ENCODE measurements at regions of chr11 and their contacts with region 1.

Region 1: GRCh38 chr11:65418711-65419459 is 3.7 kb upstream of the NEAT1 start:
- DNase-seq: peak; percentile 91
- ATAC-seq: peak; percentile 57
- H3K4me3 ChIP-seq: peak overlapping the region; percentile 79
- H3K27ac ChIP-seq: peak overlapping the region; percentile 100
- H3K4me1 ChIP-seq: peaks cover 51% of the 10 kb centered on the region
- H3K27me3 ChIP-seq: no peaks in the 10 kb centered on the region
- CTCF ChIP-seq: no peak
- EP300 ChIP-seq: peak; percentile 39 to 52; a peak in 3 of 4 replicates
- POLR2A ChIP-seq: peak; percentile 80
- RAD21 ChIP-seq: no peak

Region 2: DNA sequence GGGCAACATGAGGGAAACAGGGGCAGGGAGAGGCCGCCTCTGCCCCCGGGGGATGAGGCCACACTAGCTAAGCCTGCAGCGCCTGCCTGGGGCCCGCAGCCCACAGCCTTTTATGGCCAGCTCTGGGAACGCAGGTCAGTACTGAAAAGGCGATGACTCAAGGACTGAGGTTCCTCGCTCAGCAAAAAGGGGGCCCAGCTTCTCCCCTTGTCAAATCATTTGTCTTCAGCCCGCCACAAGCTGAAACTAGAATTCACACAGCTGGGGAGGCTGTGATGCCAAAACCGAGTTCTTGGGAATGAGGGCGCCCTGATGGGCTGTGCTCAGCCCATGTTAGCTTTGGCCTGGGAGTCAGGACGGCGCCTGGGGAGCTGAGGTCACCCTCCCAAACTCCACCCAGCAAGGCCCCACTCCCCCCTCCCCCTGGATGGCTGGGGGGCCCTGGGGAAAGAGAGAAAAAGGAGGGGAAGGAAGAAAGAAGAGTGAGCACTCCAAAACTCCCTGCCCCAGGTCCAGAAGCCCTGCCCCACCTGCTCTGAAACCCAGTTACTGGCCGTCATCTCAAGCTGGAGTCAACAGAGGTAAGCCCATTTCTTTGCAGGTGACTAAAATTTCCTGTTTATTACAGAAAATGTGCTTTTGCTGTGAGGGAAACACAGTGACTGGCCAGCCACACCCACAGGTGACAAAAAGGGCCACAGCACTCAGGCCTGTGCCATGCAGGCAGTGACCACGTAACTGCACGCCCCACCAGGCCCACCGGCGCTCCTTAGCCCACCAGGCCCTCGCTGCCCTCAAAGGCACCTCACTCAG is 554.2 kb before region 1 on chr11:
- CTCF ChIA-PET with region 1: no interaction called
- POLR2A ChIA-PET with region 1: no interaction called
- RAD21 ChIA-PET with region 1: no interaction called
- SMC1A ChIA-PET with region 1: no interaction called
- in situ Hi-C with region 1: loop called (anchors 10 kb)
- intact Hi-C with region 1: no loop called
- DNase-seq: no peak
- ATAC-seq: peak; percentile 59
- H3K4me3 ChIP-seq: peak overlapping the region; percentile 44
- H3K27ac ChIP-seq: peak overlapping the region; percentile 99
- H3K4me1 ChIP-seq: peaks cover 91% of the 10 kb centered on the region
- H3K27me3 ChIP-seq: no peaks in the 10 kb centered on the region
- CTCF ChIP-seq: no peak
- EP300 ChIP-seq: peak in 1 of 2 experiments; percentile 26; a peak in 2 of 4 replicates
- POLR2A ChIP-seq: peak; percentile 78
- RAD21 ChIP-seq: no peak

Region 3: GRCh38 chr11:64960719-64961118 is 458.2 kb before region 1 on chr11:
- CTCF ChIA-PET with region 1: no interaction called
- POLR2A ChIA-PET with region 1: no interaction called
- RAD21 ChIA-PET with region 1: no interaction called
- SMC1A ChIA-PET with region 1: no interaction called
- in situ Hi-C with region 1: no loop called
- intact Hi-C with region 1: no loop called
- DNase-seq: no peak
- ATAC-seq: no peak
- H3K4me3 ChIP-seq: no peak overlapping the region
- H3K27ac ChIP-seq: no peak overlapping the region
- H3K4me1 ChIP-seq: no peaks in the 10 kb centered on the region
- H3K27me3 ChIP-seq: no peaks in the 10 kb centered on the region
- CTCF ChIP-seq: no peak
- EP300 ChIP-seq: no peak
- POLR2A ChIP-seq: no peak
- RAD21 ChIP-seq: no peak

Region 4: DNA sequence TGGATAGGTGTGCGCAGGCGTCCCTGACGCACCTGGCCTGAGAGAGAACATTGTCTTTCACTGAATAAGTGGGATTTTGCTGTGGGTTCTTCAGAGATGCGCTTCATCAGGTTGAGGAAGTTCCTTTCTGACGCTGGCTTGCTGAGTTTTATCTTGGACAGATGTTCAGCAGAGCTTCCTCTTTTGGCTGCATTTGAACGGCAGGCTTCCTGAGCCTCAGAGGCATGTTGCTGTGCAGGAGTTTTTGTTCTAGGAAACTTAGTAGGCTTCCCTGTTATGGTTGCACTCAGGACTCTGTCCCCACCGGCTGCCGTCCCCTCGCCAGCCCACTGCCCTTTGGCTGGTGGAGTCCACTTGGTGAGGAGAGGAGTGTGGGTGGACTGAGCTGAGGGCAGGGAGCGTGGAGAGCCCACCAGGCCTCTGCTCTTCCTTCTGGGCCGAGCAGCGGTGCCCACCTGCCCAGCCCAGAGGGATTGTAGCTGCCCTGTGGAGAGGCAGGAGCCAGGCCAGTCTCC is 15.2 kb before region 1 on chr11:
- CTCF ChIA-PET with region 1: interaction called, 13 read pairs
- POLR2A ChIA-PET with region 1: interaction called, 10 read pairs
- RAD21 ChIA-PET with region 1: interaction called, 10 read pairs
- SMC1A ChIA-PET with region 1: interaction called, 12 read pairs
- in situ Hi-C with region 1: no loop called
- intact Hi-C with region 1: no loop called
- DNase-seq: no peak
- ATAC-seq: peak; percentile 72
- H3K4me3 ChIP-seq: no peak overlapping the region
- H3K27ac ChIP-seq: peak overlapping the region; percentile 91
- H3K4me1 ChIP-seq: peaks cover 20% of the 10 kb centered on the region
- H3K27me3 ChIP-seq: no peaks in the 10 kb centered on the region
- CTCF ChIP-seq: no peak
- EP300 ChIP-seq: no peak
- POLR2A ChIP-seq: no peak
- RAD21 ChIP-seq: no peak

Region 5: DNA sequence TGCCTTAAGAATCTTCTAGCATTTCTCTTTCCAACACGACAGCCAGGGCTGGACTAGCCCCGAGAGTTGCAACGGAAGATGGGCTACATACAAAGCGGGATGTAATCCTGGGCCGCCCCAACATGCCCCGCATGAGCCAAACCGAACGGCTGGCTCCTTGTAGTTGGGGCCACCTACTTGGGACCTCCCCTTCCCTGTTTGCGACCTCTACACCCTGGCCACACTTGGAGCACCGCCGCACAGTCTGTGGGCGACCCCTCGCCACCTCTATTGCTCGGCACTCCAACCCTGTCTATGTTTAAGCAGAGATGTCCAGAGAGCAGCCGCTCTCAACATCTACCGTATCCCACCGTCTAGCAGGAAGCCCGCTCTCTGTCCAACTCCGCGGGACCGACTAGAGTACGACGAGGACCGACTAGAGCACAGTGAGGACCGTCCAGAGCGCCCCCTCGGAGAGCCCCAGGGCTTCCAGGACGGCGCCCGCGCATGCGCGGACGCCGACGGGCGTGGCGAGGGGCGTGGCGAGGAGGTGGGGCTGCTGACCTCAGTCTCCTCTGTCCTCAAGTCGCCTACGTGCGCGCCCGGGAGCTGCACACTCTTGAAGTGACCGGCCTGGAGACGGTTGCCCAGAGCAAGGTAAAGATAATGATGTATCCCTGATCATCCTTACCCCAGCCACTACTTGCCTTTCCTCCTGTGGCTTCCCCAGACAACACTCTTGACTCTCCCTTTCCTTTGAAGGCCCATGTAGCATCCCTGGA is 36.0 kb after region 1 on chr11:
- CTCF ChIA-PET with region 1: interaction called, 362 read pairs
- POLR2A ChIA-PET with region 1: interaction called, 17 read pairs
- RAD21 ChIA-PET with region 1: interaction called, 13 read pairs
- SMC1A ChIA-PET with region 1: interaction called, 17 read pairs
- in situ Hi-C with region 1: no loop called
- intact Hi-C with region 1: loop called (anchors 5 kb)
- DNase-seq: peak; percentile 77
- ATAC-seq: peak; percentile 82
- H3K4me3 ChIP-seq: peak overlapping the region; percentile 80
- H3K27ac ChIP-seq: peak overlapping the region; percentile 93
- H3K4me1 ChIP-seq: peaks cover 25% of the 10 kb centered on the region
- H3K27me3 ChIP-seq: no peaks in the 10 kb centered on the region
- CTCF ChIP-seq: peak; percentile 12 to 40 (median 17); a peak in 4 of 6 replicates
- EP300 ChIP-seq: 0 out of 4 replicates have a peak, but pooled peaks of 1 of the 2 experiments have one; percentile 23
- POLR2A ChIP-seq: peak; percentile 99
- RAD21 ChIP-seq: 0 out of 2 replicates have a peak, but pooled peaks have one; percentile 5

Region 6: DNA sequence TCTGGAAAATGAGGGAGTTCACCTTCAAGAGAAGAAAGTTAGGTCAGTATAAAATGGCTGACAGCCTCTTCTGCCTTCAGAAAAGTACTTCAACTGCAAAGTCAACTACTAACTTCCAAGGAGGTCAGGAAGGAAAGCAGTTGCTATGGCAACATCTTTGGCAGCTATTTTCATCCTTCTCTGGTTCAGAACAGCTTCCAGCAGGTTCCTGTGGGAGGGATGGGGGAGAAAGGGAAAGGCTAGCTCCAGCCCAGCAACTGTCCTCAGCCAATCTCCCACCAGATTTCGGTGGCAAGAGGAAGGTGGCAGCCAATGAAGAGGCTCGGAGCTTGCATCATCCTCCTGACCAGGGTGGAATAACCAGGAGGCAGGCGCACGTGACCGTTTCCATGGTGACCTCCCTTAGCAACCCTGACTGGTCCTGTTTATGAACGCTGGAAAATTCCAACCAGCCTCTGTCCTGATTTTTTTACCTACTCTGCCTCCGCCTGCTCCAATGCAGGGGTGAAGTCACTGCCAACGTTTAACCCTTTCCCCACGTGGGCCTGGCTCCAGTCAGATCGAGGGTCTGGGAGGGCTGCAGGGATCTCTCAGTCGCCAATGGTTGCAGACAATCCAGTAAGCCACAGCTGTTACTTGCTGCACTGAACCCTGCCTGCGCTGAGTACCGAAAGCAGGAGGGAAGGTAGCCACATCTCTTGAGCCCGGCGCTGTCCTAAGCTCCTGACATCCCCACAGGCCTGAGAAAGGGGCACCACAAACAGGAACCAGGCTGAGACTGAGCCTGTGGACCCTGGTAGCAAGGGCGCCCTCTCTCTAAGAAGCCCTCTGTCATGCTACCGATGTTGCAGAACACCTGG is 68.8 kb after region 1 on chr11:
- CTCF ChIA-PET with region 1: interaction called, 10 read pairs
- POLR2A ChIA-PET with region 1: interaction called, 44 read pairs
- RAD21 ChIA-PET with region 1: interaction called, 282 read pairs
- SMC1A ChIA-PET with region 1: interaction called, 115 read pairs
- in situ Hi-C with region 1: no loop called
- intact Hi-C with region 1: no loop called
- DNase-seq: no peak
- ATAC-seq: peak; percentile 79
- H3K4me3 ChIP-seq: peak overlapping the region; percentile 15; the same call in 1 of the 2 replicates
- H3K27ac ChIP-seq: peak overlapping the region; percentile 62
- H3K4me1 ChIP-seq: peaks cover 61% of the 10 kb centered on the region
- H3K27me3 ChIP-seq: no peaks in the 10 kb centered on the region
- CTCF ChIP-seq: peak in 1 of 3 experiments; percentile 12; a peak in 2 of 6 replicates
- EP300 ChIP-seq: peak in 1 of 2 experiments; percentile 61; a peak in 1 of 4 replicates
- POLR2A ChIP-seq: peak; percentile 48; the same call in 1 of the 2 replicates
- RAD21 ChIP-seq: no peak

Region 7: DNA sequence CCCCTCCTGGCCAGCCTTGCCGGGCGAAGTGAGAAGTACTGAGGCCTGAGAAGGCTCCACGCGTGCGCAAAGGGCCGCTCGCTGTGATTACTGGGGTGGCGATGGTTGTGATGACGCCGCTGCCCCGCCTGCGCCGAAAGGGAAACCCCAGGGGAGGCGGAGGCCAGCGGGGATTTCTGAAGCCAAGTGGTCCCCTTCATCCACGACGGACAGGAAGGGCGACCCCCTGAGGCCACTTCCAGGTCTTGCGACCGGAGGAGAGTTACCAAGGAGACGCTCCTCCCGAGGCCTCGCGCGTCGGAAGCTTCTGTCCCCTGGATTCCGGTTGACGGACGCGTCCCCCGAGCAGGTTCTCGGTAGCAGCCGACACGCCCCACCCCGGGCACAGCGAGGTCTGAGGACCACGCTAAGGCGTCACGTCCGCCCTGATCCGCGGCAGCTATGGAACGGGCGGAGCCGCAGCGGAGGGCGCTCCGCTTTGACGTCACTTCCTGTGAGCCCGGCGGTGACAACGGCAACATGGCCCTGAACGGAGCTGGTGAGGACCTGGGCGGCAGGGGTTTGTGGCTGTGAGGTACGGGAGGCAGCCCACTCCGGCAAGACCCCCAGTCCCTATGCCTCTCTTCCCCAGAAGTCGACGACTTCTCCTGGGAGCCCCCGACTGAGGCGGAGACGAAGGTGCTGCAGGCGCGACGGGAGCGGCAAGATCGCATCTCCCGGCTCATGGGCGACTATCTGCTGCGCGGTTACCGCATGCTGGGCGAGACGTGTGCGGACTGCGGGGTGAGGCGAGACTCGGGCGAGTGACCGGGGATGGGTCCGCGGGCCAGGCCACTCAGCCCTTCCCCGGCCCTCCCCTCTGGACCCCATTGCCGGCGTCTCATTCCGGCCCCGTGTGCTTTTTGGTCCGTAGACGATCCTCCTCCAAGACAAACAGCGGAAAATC is 151.4 kb after region 1 on chr11 and contains the start of gene ZNRD2:
- CTCF ChIA-PET with region 1: interaction called, 3 read pairs
- POLR2A ChIA-PET with region 1: interaction called, 4 read pairs
- RAD21 ChIA-PET with region 1: interaction called, 6 read pairs
- SMC1A ChIA-PET with region 1: interaction called, 4 read pairs
- in situ Hi-C with region 1: no loop called
- intact Hi-C with region 1: loop called (anchors 5 kb)
- DNase-seq: peak; percentile 97
- ATAC-seq: peak; percentile 77
- H3K4me3 ChIP-seq: peak within 1 kb of the TSS; percentile 84
- H3K27ac ChIP-seq: peak within 1 kb of the TSS; percentile 76
- H3K4me1 ChIP-seq: peaks cover 33% of the 10 kb centered on the region
- H3K27me3 ChIP-seq: no peaks in the 10 kb centered on the region
- CTCF ChIP-seq: peak; percentile 69 to 79 (median 69)
- EP300 ChIP-seq: peak in 1 of 2 experiments; percentile 22; a peak in 2 of 4 replicates
- POLR2A ChIP-seq: peak; percentile 78
- RAD21 ChIP-seq: peak; percentile 55
- polyA plus RNA-seq, gene ZNRD2: 14.8 to 48.7 TPM

Measured in GM12878 (cell line).